Activated CD4-positive, alpha-beta memory T cell treated with anti-CD3 and anti-CD28 coated beads for 36 hours (primary cell): ENCODE measurements at regions of chr4 and their contacts with region 1.

Region 1: GRCh38 chr4:158671915-158672806 is at the start of gene ETFDH:
- DNase-seq: peak; percentile 99
- H3K4me3 Mint-ChIP-seq: peak within 1 kb of the TSS; percentile 99
- H3K27ac Mint-ChIP-seq: peak within 1 kb of the TSS; percentile 93
- H3K4me1 Mint-ChIP-seq: peaks cover 20% of the 10 kb centered on the region
- H3K27me3 Mint-ChIP-seq: no peaks in the 10 kb centered on the region
- total RNA-seq, gene ETFDH: 30.8 to 30.9 TPM

Region 2: GRCh38 chr4:158644760-158645159 is 27.4 kb before region 1 on chr4:
- CTCF ChIA-PET with region 1: no interaction called
- POLR2A ChIA-PET with region 1: no interaction called
- intact Hi-C with region 1: no loop called
- DNase-seq: no peak
- H3K4me3 Mint-ChIP-seq: no peak overlapping the region
- H3K27ac Mint-ChIP-seq: no peak overlapping the region
- H3K4me1 Mint-ChIP-seq: no peaks in the 10 kb centered on the region
- H3K27me3 Mint-ChIP-seq: peaks cover 3% of the 10 kb centered on the region

Region 3: DNA sequence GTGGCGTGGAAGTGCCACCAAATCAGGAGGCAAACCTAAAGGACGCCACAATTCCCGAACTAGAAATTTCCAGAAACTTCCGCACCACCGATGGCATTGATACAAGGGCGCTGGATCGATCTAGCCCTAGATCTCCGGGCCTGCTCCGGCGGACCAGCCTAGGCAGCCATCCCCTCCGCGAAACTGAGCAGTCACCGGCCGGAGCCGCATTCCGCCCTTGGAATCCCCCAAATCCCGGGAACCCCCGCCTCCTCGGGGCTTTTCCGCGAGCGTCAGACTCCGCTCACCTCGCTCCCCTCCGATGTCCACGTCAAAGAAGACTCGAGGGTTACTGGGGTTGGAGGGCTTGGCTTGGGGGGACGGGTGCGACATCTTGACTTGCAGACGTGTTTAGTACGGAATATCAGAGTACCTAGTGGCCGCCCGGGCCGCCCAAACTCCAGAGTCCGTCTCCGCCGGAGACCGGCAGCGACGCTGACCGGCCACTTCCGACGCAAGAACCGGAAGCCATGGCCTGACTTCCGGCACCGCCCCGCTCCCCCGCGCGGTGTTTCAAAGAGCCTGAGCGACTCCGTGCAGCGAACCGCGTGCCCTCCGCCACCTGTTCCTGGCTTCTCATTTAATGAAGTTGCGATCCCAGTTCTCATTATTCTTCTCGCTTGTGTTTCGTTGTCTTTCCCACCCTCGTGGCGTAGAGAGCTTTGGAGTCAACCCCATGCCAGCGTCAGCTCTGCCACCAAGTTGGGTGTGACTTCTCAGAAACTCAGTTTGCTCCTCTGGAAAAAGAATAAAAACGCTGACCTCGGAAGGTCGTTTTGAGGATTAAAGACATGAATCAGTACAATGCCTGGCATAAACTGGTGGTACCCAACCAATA is 51.0 kb after region 1 on chr4 and contains the start of gene PPID:
- CTCF ChIA-PET with region 1: no interaction called
- POLR2A ChIA-PET with region 1: interaction called, 4 read pairs
- intact Hi-C with region 1: loop called (anchors 1 kb)
- DNase-seq: peak; percentile 91
- H3K4me3 Mint-ChIP-seq: peak within 1 kb of the TSS; percentile 93
- H3K27ac Mint-ChIP-seq: peak within 1 kb of the TSS; percentile 99
- H3K4me1 Mint-ChIP-seq: peaks cover 54% of the 10 kb centered on the region
- H3K27me3 Mint-ChIP-seq: peaks cover 8% of the 10 kb centered on the region
- total RNA-seq, gene PPID: 66.4 to 67.2 TPM

Region 4: GRCh38 chr4:158850800-158851644 is 178.9 kb after region 1 on chr4:
- CTCF ChIA-PET with region 1: no interaction called
- POLR2A ChIA-PET with region 1: no interaction called
- intact Hi-C with region 1: loop called (anchors 5 kb)
- DNase-seq: no peak
- H3K4me3 Mint-ChIP-seq: no peak overlapping the region
- H3K27ac Mint-ChIP-seq: no peak overlapping the region
- H3K4me1 Mint-ChIP-seq: peaks cover 18% of the 10 kb centered on the region
- H3K27me3 Mint-ChIP-seq: no peaks in the 10 kb centered on the region

Region 5: GRCh38 chr4:159102622-159103383 is 430.6 kb after region 1 on chr4 and contains the start of gene RAPGEF2:
- CTCF ChIA-PET with region 1: no interaction called
- POLR2A ChIA-PET with region 1: no interaction called
- intact Hi-C with region 1: loop called (anchors 1 kb)
- DNase-seq: peak; percentile 91
- H3K4me3 Mint-ChIP-seq: peak within 1 kb of the TSS; percentile 79
- H3K27ac Mint-ChIP-seq: peak within 1 kb of the TSS; percentile 81
- H3K4me1 Mint-ChIP-seq: peaks cover 46% of the 10 kb centered on the region
- H3K27me3 Mint-ChIP-seq: peaks cover 5% of the 10 kb centered on the region
- total RNA-seq, gene RAPGEF2: 18.6 to 22.0 TPM

Region 6: GRCh38 chr4:159446266-159446976 is 774.3 kb after region 1 on chr4:
- CTCF ChIA-PET with region 1: no interaction called
- POLR2A ChIA-PET with region 1: no interaction called
- intact Hi-C with region 1: loop called (anchors 5 kb)
- DNase-seq: peak; percentile 28
- H3K4me3 Mint-ChIP-seq: no peak overlapping the region
- H3K27ac Mint-ChIP-seq: no peak overlapping the region
- H3K4me1 Mint-ChIP-seq: no peaks in the 10 kb centered on the region
- H3K27me3 Mint-ChIP-seq: peaks cover 9% of the 10 kb centered on the region